ENCODE measurements at regions of chr14 and their contacts with region 1.

Region 1: GRCh38 chr14:104184911-104185499 is 46.6 kb downstream of the KIF26A start:
- DNase-seq: no peak
- H3K4me3 ChIP-seq: no peak overlapping the region
- H3K27ac ChIP-seq: no peak overlapping the region
- H3K4me1 ChIP-seq: no peaks in the 10 kb centered on the region; a peak in 2 of 7 replicates
- H3K27me3 ChIP-seq: no peaks in the 10 kb centered on the region
- CTCF ChIP-seq: no peak
- EP300 ChIP-seq: no peak
- POLR2A ChIP-seq: no peak
- RAD21 ChIP-seq: no peak

Region 2: GRCh38 chr14:104196461-104197140 is 11.6 kb after region 1 on chr14:
- CTCF ChIA-PET with region 1: interaction called, 12 read pairs
- POLR2A ChIA-PET with region 1: no interaction called
- DNase-seq: no peak
- H3K4me3 ChIP-seq: no peak overlapping the region
- H3K27ac ChIP-seq: no peak overlapping the region
- H3K4me1 ChIP-seq: peaks cover 0 to 3% (median 0%) of the 10 kb centered on the region in 4 experiments; a peak in 2 of 7 replicates
- H3K27me3 ChIP-seq: peaks cover 0 to 1% (median 0%) of the 10 kb centered on the region in 4 experiments; a peak in 1 of 7 replicates
- CTCF ChIP-seq: no peak
- EP300 ChIP-seq: no peak
- POLR2A ChIP-seq: no peak
- RAD21 ChIP-seq: no peak